Natural killer cell (primary cell): ENCODE measurements at regions of chr1 and their contacts with region 1.

Region 1: GRCh38 chr1:161738627-161739287 is 10.8 kb upstream of the DUSP12 start:
- DNase-seq: peak; percentile 79 to 83
- ATAC-seq: peak; percentile 91 to 93 (median 92)
- H3K4me3 ChIP-seq: no peak overlapping the region
- H3K4me3 Mint-ChIP-seq: peak overlapping the region; percentile 58
- H3K27ac ChIP-seq: peak overlapping the region; percentile 57
- H3K27ac Mint-ChIP-seq: peak overlapping the region; percentile 81 to 84
- H3K4me1 ChIP-seq: peaks cover 32% of the 10 kb centered on the region
- H3K4me1 Mint-ChIP-seq: peaks cover 34 to 45% of the 10 kb centered on the region in 2 donors
- H3K27me3 ChIP-seq: no peaks in the 10 kb centered on the region
- H3K27me3 Mint-ChIP-seq: no peaks in the 10 kb centered on the region
- CTCF ChIP-seq: peak; percentile 55

Region 2: DNA sequence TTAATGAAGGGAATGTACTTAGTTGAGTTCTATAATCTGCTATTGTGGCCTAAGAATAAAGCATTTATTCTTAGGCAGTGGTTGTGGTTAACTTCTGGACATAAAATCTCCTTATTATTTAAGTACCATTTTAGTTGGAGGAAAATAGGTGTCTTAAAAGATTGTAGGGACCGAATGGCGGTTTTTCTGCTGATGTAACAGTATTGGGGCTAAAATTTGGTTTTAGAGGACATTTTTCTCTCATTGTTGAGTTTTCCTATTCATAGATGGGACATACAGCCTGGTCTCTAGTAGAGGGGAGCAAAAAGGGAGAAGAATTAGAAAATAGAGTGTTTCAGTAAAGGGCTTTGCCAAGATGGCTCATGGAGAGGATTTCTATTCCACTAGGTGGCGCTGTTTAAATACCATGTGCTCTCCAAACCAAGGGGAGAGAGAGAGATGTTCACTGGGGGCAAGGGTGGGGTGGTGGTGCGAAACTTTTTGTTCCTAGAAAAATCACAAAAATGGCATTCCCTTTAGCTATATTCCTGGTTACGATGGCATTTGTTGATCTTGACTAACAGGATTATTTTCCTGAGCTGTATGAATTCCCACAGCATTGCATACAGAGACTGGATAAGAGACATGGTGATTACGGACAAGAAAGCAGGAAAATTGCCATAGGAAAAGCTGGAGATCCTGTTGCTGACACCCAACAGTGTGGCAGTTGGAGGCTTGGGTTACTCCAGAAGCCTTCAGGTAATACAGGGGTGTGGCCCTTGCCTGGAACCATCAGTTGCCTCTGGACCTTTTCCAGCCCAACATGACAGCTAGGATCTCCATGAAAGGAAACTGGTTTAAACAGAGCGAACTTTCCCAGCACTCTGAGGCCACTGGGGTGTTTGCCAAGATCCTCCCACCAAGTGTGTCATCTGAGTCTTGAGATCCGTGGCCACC is 251.7 kb before region 1 on chr1:
- intact Hi-C with region 1: loop called (anchors 1 kb)
- DNase-seq: peak in 1 of 2 donors; percentile 84
- ATAC-seq: peak; percentile 73 to 86 (median 85)
- H3K4me3 ChIP-seq: no peak overlapping the region
- H3K4me3 Mint-ChIP-seq: no peak overlapping the region
- H3K27ac ChIP-seq: no peak overlapping the region
- H3K27ac Mint-ChIP-seq: no peak overlapping the region
- H3K4me1 ChIP-seq: peaks cover 10% of the 10 kb centered on the region
- H3K4me1 Mint-ChIP-seq: peaks cover 15 to 18% of the 10 kb centered on the region in 2 donors
- H3K27me3 ChIP-seq: peaks cover 4% of the 10 kb centered on the region
- H3K27me3 Mint-ChIP-seq: peaks cover 22 to 28% of the 10 kb centered on the region in 2 donors
- CTCF ChIP-seq: peak; percentile 90

Region 3: GRCh38 chr1:161691846-161692245 is 46.9 kb before region 1 on chr1:
- intact Hi-C with region 1: no loop called
- DNase-seq: no peak
- ATAC-seq: no peak
- H3K4me3 ChIP-seq: no peak overlapping the region
- H3K4me3 Mint-ChIP-seq: no peak overlapping the region
- H3K27ac ChIP-seq: no peak overlapping the region
- H3K27ac Mint-ChIP-seq: no peak overlapping the region
- H3K4me1 ChIP-seq: peaks cover 2% of the 10 kb centered on the region
- H3K4me1 Mint-ChIP-seq: peaks cover 0 to 5% of the 10 kb centered on the region in 2 donors
- H3K27me3 ChIP-seq: peaks cover 3% of the 10 kb centered on the region
- H3K27me3 Mint-ChIP-seq: peaks cover 8 to 15% of the 10 kb centered on the region in 2 donors
- CTCF ChIP-seq: no peak